MCF 10A (cell line): ENCODE measurements at regions of chr14 and their contacts with region 1.

Region 1: GRCh38 chr14:54420013-54420809 is 21.0 kb downstream of the CNIH1 start:
- DNase-seq: peak; percentile 59
- H3K4me3 Mint-ChIP-seq: no peak overlapping the region
- H3K27ac Mint-ChIP-seq: no peak overlapping the region
- H3K4me1 Mint-ChIP-seq: peaks cover 8% of the 10 kb centered on the region
- H3K27me3 Mint-ChIP-seq: no peaks in the 10 kb centered on the region
- CTCF ChIP-seq: peak; percentile 48

Region 2: DNA sequence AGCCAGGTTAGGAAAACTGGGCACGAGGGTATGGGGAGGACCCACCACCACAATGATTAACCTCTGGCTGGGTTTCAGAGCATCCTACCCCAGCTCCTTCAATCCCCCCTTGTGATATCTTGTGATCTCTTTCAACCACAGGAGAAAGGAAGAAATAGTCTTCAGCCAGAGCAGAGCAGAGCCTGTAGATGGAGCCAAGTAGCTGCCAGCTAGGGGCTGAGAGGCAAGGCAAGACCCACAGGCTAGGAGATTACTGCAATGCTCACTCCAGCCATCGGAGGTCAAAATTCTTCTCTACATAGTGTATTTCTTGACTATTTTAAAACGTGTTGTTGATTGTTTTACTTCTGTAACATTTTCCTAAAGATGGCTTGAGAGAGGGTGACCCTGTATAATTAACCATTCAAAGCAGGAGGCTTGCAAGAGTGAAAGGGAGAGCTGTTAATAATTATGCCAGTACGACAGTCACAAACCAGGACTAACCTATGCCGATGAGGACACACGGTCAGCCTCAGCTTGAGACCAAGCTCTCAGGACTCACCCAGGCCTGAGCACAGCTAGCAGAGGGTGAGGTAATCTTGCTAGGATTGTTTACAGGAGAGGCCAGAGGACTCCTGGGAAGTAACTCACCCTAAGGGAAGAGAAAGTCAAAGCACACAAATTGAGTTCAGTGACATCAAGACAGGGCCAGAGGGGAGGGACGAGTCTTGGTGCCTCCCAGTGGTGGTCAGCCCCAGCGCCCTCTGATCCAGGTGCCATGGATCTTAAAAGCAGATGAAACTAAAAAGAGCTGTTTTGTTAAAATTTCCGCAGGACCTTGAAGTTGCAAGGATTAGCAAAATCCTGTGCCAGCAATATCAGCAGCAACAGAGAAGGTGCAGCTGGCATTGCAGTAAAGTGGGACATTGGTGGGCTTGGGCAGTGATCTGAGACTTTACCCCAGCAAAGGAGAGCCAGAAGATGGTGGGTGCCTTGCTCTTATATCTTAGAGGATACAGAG is 53.2 kb before region 1 on chr14:
- CTCF ChIA-PET with region 1: interaction called, 9 read pairs
- POLR2A ChIA-PET with region 1: interaction called, 4 read pairs
- intact Hi-C with region 1: loop called (anchors 1 kb)
- DNase-seq: peak; percentile 62
- H3K4me3 Mint-ChIP-seq: no peak overlapping the region
- H3K27ac Mint-ChIP-seq: no peak overlapping the region
- H3K4me1 Mint-ChIP-seq: no peaks in the 10 kb centered on the region
- H3K27me3 Mint-ChIP-seq: no peaks in the 10 kb centered on the region
- CTCF ChIP-seq: peak; percentile 39